Heart left ventricle (tissue), 16 donors: ENCODE measurements at regions of chr11 and their contacts with region 1.

Region 1: GRCh38 chr11:12331239-12331874 is 46.0 kb upstream of the PARVA start:
- DNase-seq: peak; percentile 77 to 90 (median 79)
- ATAC-seq: peak; percentile 71 to 90 (median 82)
- H3K4me3 ChIP-seq: no peak overlapping the region
- H3K27ac ChIP-seq: peak overlapping the region in 1 of 12 donors; percentile 73
- H3K4me1 ChIP-seq: peaks cover 0 to 6% (median 0%) of the 10 kb centered on the region in 12 donors
- H3K27me3 ChIP-seq: no peaks in the 10 kb centered on the region
- CTCF ChIP-seq: peak; percentile 61 to 87 (median 79)
- POLR2A ChIP-seq: no peak

Region 2: GRCh38 chr11:12377824-12378593 is 46.7 kb after region 1 on chr11:
- intact Hi-C with region 1: loop called in 1 of 10 experiments (anchors 2 kb)
- DNase-seq: peak; percentile 65 to 85 (median 77)
- ATAC-seq: peak; percentile 21 to 82 (median 66)
- H3K4me3 ChIP-seq: peak overlapping the region; percentile 59 to 98 (median 72)
- H3K27ac ChIP-seq: peak overlapping the region; percentile 93 to 99 (median 97)
- H3K4me1 ChIP-seq: peaks cover 1 to 68% (median 37%) of the 10 kb centered on the region in 12 donors
- H3K27me3 ChIP-seq: peaks cover 0 to 11% (median 0%) of the 10 kb centered on the region in 9 donors
- CTCF ChIP-seq: peak in 8 of 12 donors; percentile 14 to 51 (median 28)
- POLR2A ChIP-seq: no peak

Region 3: GRCh38 chr11:12397931-12398334 is 66.6 kb after region 1 on chr11:
- intact Hi-C with region 1: no loop called
- DNase-seq: peak; percentile 60 to 82 (median 75)
- ATAC-seq: peak; percentile 89 to 94 (median 93)
- H3K4me3 ChIP-seq: no peak overlapping the region
- H3K27ac ChIP-seq: peak overlapping the region; percentile 3 to 98 (median 68)
- H3K4me1 ChIP-seq: peaks cover 0 to 57% (median 29%) of the 10 kb centered on the region in 12 donors
- H3K27me3 ChIP-seq: no peaks in the 10 kb centered on the region
- CTCF ChIP-seq: no peak
- POLR2A ChIP-seq: no peak

Region 4: GRCh38 chr11:12496171-12497025 is 165.0 kb after region 1 on chr11:
- intact Hi-C with region 1: loop called in 2 of 10 experiments (anchors 10 kb)
- DNase-seq: no peak
- ATAC-seq: peak; percentile 38 to 69 (median 52)
- H3K4me3 ChIP-seq: no peak overlapping the region
- H3K27ac ChIP-seq: no peak overlapping the region
- H3K4me1 ChIP-seq: peaks cover 0 to 7% (median 0%) of the 10 kb centered on the region in 12 donors
- H3K27me3 ChIP-seq: no peaks in the 10 kb centered on the region
- CTCF ChIP-seq: peak in 8 of 12 donors; percentile 6 to 44 (median 18)
- POLR2A ChIP-seq: no peak

Region 5: GRCh38 chr11:12581923-12582322 is 250.6 kb after region 1 on chr11:
- intact Hi-C with region 1: loop called in 1 of 10 experiments (anchors 10 kb)
- DNase-seq: no peak
- ATAC-seq: peak in 2 of 4 donors; percentile 42 to 68
- H3K4me3 ChIP-seq: no peak overlapping the region
- H3K27ac ChIP-seq: no peak overlapping the region
- H3K4me1 ChIP-seq: peaks cover 0 to 20% (median 5%) of the 10 kb centered on the region in 12 donors
- H3K27me3 ChIP-seq: no peaks in the 10 kb centered on the region
- CTCF ChIP-seq: no peak
- POLR2A ChIP-seq: no peak

Region 6: GRCh38 chr11:12888525-12889158 is 557.3 kb after region 1 on chr11:
- intact Hi-C with region 1: loop called in 9 of 10 experiments (anchors 1 to 5 kb)
- DNase-seq: peak; percentile 83 to 88 (median 86)
- ATAC-seq: peak; percentile 72 to 91 (median 86)
- H3K4me3 ChIP-seq: no peak overlapping the region
- H3K27ac ChIP-seq: peak overlapping the region in 11 of 12 donors; percentile 37 to 84 (median 71)
- H3K4me1 ChIP-seq: peaks cover 0 to 52% (median 26%) of the 10 kb centered on the region in 12 donors
- H3K27me3 ChIP-seq: no peaks in the 10 kb centered on the region
- CTCF ChIP-seq: peak; percentile 54 to 88 (median 78)
- POLR2A ChIP-seq: no peak

Region 7: DNA sequence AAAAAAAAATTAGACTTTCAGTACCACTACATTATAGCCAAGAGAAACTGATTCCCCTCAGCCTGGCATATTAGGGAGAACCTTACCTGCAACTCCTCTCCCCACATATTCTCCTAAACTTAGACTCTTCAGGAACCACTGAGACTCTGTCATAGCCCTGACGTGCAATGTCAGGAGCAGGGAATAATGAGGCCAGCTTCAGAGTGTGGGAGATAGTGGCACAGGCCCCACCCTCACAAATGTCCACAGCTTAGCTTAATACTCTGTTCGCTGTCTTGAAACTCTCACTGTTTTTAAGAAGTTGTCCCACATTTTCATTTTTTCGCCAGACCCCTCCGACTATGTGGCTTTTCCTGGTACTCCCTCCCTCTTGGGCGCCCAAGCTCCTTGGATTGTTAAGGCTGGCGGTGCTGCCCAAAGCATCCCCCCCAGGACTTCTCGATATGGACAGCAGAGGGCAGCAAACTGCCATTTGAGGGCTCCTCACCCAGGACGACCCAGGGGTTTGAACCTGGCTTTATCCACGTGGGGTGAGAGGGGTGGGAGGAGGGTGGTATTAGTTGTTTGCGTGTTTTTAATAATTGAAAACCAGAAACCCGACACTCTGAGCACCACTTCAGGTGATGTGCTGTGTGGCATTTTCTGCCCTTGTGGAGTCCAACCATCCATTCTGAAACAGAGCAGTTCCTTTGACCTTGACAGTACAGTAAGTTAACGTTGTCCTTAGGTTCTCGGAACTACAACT is 632.6 kb after region 1 on chr11:
- intact Hi-C with region 1: loop called in 2 of 10 experiments (anchors 5 kb)
- DNase-seq: peak; percentile 50 to 69 (median 57)
- ATAC-seq: peak; percentile 60 to 93 (median 91)
- H3K4me3 ChIP-seq: no peak overlapping the region
- H3K27ac ChIP-seq: no peak overlapping the region
- H3K4me1 ChIP-seq: peaks cover 0 to 5% (median 0%) of the 10 kb centered on the region in 12 donors
- H3K27me3 ChIP-seq: no peaks in the 10 kb centered on the region
- CTCF ChIP-seq: peak; percentile 72 to 94 (median 86)
- POLR2A ChIP-seq: no peak

Region 8: DNA sequence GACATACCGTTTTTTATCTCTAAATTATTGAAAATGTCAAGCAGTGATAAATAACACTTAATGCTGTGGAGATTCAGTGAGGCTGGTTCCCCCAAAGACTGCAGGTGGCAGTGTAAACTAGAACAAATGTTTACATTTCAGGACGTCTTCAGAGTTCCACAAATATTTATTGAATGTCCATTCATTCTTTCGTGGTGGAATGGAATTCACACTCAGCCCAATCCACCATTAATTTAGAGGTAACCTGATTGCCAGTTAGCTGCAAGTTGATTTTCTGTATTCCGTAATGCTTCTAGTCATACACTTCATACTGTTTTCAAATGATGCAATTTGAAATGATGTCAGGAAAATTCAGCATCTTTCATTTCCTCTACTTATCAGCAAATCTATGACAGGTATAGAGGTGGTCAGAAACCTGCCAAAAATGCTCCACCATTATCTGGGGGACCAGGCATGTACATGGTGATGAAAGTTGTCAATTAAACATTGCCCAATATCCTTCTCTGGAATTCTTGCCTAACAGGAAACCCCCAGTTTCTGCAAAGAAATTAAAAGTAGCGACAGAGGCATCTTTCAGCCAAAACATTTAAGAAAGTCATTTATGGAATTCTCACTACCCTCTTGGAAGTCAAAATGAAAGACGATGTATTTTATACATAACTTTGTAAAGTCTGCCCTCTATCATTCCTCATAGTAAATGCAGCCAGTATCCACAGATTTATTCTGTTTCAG is 851.9 kb after region 1 on chr11:
- intact Hi-C with region 1: loop called in 2 of 10 experiments (anchors 5 to 10 kb)
- DNase-seq: no peak
- ATAC-seq: peak in 2 of 4 donors; percentile 36 to 63
- H3K4me3 ChIP-seq: peak overlapping the region in 8 of 12 donors; percentile 5 to 40 (median 20)
- H3K27ac ChIP-seq: no peak overlapping the region
- H3K4me1 ChIP-seq: peaks cover 0 to 8% (median 4%) of the 10 kb centered on the region in 12 donors
- H3K27me3 ChIP-seq: no peaks in the 10 kb centered on the region
- CTCF ChIP-seq: peak in 11 of 12 donors; percentile 20 to 62 (median 44)
- POLR2A ChIP-seq: no peak